Mammary epithelial cell (primary cell): ENCODE measurements at regions of chr3 and their contacts with region 1.

Region 1: DNA sequence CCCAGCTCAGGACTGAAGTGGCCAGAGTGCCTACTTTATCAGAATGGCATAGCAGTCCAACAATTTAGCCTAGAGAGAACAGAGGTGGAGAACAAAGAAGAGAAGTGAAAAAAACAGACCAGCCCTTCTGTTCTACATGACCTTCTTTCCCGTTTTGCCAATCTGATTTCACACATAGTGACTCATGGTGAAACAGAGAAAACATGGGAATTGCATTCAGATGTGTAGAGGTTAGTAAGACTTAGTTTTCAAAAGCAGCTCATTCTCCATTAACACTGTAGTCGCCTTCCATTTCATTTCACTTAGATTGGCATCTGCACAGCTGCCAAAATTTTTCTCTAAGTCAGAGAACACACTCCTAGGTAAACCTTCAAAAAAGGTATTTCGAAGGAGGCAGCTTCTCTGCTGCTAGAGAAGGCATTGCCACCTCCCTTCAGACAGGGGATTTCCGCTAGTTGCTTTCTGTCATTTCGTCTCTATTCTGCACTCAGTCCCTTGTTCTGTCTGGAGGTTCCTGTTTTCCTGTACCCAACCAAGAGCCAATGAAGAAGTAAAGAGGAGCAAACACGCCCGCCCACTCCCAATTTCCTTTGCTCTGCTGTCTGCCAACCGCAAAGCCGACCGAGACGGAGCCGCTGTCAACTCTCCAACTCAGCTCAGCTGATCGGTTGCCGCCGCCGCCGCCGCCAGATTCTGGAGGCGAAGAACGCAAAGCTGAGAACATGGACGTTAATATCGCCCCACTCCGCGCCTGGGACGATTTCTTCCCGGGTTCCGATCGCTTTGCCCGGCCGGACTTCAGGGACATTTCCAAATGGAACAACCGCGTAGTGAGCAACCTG is at the start of gene ARL6IP5:
- DNase-seq: peak; percentile 93
- H3K4me3 ChIP-seq: peak within 1 kb of the TSS; percentile 87 to 94 (median 89)
- H3K27ac ChIP-seq: peak within 1 kb of the TSS; percentile 91
- H3K4me1 ChIP-seq: peaks cover 65% of the 10 kb centered on the region
- H3K27me3 ChIP-seq: no peaks in the 10 kb centered on the region
- CTCF ChIP-seq: no peak
- total RNA-seq, gene ARL6IP5: 74.7 to 116 TPM

Region 2: DNA sequence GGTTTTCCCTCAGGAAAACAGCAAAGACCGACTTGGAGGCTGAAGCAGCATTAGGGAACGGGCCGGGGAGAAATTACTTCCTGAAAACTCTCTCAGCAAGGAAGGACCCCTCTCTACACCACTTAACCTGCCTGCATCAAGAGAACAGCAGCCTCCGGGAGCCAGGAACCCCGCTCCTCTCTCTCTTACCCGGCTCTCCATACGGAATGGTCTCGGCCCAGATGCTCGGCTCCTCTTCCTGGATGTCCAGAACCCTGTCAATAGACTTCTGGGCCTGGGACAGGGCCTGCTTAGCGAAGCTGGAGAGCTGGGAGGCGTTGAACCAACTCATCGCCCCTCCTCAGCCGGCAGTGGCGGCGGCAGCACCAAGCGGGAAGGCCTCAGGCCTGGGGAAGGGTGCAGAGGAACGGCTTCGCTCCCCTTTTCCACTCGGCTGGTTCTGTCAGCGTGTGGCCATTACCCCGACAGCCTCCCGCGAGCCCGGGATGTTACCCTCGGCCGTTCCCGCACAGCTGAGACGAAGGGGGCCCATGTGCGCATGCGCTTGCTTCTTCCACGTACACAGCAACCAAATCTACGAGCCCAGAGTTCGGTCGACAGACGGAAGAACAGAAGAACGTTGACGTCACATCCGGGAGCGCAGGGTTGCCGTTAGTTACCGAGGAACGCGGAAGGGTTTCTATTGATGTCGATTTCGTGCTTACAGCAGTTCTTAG is 32.6 kb before region 1 on chr3 and contains the start of gene TMF1:
- CTCF ChIA-PET with region 1: no interaction called
- dilution Hi-C with region 1: no loop called
- in situ Hi-C with region 1: no loop called
- intact Hi-C with region 1: loop called (anchors 2 kb)
- DNase-seq: peak; percentile 98
- H3K4me3 ChIP-seq: peak within 1 kb of the TSS; percentile 75 to 94 (median 90)
- H3K27ac ChIP-seq: peak within 1 kb of the TSS; percentile 91
- H3K4me1 ChIP-seq: peaks cover 10% of the 10 kb centered on the region
- H3K27me3 ChIP-seq: no peaks in the 10 kb centered on the region
- CTCF ChIP-seq: no peak
- total RNA-seq, gene TMF1: 35.4 to 46.3 TPM

Region 3: GRCh38 chr3:69095636-69096035 is 11.1 kb after region 1 on chr3:
- CTCF ChIA-PET with region 1: no interaction called
- dilution Hi-C with region 1: no loop called
- in situ Hi-C with region 1: no loop called
- intact Hi-C with region 1: loop called (anchors 1 kb)
- DNase-seq: no peak
- H3K4me3 ChIP-seq: no peak overlapping the region
- H3K27ac ChIP-seq: no peak overlapping the region
- H3K4me1 ChIP-seq: peaks cover 51% of the 10 kb centered on the region
- H3K27me3 ChIP-seq: no peaks in the 10 kb centered on the region
- CTCF ChIP-seq: no peak

Region 4: DNA sequence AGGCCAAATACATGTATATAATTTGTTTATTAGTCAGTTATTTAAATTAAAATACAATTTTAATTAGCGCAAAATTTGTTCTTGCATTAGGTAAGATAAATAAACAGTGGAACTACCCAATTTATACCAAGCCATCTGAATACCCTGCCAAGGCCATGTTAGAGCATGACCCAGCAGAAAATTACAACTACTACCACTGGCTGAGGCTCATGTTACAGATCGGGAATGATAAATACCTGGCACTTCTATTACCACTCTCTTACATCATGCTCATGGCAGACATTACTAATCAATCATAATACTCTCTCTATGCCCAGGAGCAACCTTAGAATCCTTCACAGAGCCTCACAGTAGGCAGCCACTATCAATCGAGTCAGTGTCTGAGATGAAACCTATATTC is 59.1 kb after region 1 on chr3:
- CTCF ChIA-PET with region 1: no interaction called
- dilution Hi-C with region 1: no loop called
- in situ Hi-C with region 1: no loop called
- intact Hi-C with region 1: no loop called
- DNase-seq: peak; percentile 71
- H3K4me3 ChIP-seq: no peak overlapping the region
- H3K27ac ChIP-seq: no peak overlapping the region
- H3K4me1 ChIP-seq: no peaks in the 10 kb centered on the region
- H3K27me3 ChIP-seq: no peaks in the 10 kb centered on the region
- CTCF ChIP-seq: no peak

Region 5: DNA sequence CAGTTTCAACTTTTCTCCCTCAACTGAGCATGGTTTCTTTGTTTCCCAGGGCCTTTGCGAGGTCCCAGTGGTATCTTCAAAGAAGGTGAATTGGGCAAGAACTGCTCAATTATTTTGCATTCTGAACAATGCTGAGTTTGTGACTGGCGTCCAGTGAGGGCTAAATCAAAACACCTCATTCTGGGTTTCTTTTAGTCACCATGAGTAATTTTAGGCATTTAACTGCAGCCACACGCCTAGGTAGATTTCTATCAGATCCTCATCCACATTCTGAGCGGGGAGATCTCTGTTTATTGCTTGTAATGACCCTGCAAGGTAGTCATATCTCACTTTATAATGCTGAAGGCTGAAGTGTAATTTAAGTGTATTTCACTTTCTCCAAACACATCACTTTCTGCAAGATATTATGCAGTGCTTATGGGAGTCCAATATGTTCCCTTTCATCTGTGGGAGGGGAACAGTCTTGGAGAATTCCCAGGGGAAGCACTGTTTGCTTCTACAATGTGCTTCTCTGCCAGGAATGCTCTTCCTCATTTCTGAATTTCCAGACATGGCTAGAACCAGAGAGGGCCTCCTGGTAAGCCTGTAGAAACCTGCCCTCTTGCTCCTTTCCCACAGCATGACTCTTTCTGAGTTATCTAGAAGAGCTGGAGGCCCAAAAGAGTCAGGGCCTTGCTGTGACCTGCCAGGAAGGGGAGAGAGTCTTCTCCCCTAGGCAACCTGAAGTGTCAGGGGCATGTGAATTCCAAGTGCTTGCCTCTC is 209.6 kb after region 1 on chr3:
- CTCF ChIA-PET with region 1: no interaction called
- dilution Hi-C with region 1: no loop called
- in situ Hi-C with region 1: no loop called
- intact Hi-C with region 1: loop called (anchors 5 kb)
- DNase-seq: peak; percentile 98
- H3K4me3 ChIP-seq: no peak overlapping the region
- H3K27ac ChIP-seq: peak overlapping the region; percentile 94
- H3K4me1 ChIP-seq: peaks cover 42% of the 10 kb centered on the region
- H3K27me3 ChIP-seq: no peaks in the 10 kb centered on the region
- CTCF ChIP-seq: peak in 1 of 2 donors; percentile 16

Region 6: DNA sequence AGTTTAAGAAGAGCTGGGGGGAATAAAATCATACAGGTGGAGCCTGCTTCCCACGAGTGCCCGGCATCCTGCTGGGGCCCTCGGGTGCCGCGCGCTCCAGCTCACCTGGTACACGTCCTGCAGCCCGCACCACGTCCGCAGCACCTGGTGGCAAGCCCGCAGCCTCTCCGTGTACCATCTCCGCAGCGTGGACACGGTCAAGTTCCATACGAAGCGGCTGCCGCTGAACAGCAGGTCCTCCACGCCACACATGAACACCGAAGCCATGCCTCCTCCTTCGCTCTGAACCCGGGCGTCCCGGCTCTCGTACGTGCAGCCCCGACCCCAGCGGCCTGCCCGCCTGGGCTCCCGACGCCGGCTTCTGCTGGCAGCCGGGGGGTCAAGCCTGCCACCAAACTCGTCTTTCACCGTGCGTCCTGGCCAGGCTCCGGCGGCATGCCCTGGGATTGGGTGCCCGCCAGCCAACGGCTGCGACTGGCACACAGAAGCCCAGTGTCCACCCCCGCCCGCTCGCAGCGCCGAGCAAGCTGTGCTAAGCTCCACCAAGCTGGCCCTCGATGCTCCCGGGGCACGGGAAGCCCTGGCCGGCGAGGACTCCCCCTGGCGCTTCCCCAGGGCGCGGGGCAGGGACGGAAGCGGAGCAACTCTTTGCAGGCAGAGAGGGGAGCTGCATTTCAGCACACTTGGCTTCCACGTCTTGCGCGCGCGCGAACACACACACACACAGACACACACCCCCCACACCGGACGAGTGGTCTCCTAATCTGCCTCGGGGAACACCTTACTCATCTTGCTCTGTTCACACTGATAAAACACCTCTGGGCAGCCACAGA is 301.4 kb after region 1 on chr3 and contains the start of gene FRMD4B:
- CTCF ChIA-PET with region 1: no interaction called
- dilution Hi-C with region 1: no loop called
- in situ Hi-C with region 1: no loop called
- intact Hi-C with region 1: no loop called
- DNase-seq: peak; percentile 65
- H3K4me3 ChIP-seq: peak within 1 kb of the TSS; percentile 32 to 68 (median 59)
- H3K27ac ChIP-seq: peak within 1 kb of the TSS; percentile 76
- H3K4me1 ChIP-seq: peaks cover 41% of the 10 kb centered on the region
- H3K27me3 ChIP-seq: no peaks in the 10 kb centered on the region
- CTCF ChIP-seq: peak; percentile 16 to 43
- total RNA-seq, gene FRMD4B: 42.0 to 64.1 TPM